ENCODE measurements at regions of chr5 and their contacts with region 1.

Region 1: DNA sequence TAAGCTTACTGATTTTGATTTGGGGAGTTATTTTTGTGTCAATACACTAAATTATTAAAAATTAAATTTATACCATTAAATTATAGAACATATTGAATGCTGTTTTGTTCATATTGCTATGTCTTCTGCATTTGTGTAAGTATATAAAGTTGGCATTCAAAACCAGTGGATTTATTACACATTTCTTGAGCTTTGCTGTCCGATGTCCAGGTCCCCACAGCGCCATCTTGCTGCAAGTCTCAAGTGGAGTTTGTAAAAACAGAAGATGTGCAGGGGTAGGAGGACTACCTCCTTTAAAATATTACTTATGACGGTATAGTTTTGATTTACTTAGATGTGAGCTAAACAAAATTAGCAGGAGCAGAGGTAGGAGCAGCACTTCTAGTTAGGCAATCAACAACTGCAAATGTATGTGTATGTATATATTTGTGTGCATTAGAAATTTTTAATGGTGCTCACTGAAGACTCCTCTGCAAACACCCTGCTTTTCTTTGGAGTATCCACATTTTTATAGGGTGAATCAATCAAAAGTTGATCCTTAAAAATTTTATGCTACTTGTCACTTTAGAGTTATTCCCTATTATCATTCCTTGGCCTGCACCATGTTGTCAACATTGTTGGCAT is 37.4 kb downstream of the CPEB4 start:
- DNase-seq: no peak
- H3K4me3 ChIP-seq: no peak overlapping the region
- H3K27ac ChIP-seq: no peak overlapping the region
- H3K4me1 ChIP-seq: no peaks in the 10 kb centered on the region
- H3K27me3 ChIP-seq: no peaks in the 10 kb centered on the region
- CTCF ChIP-seq: peak in 1 of 3 donors; percentile 14
- POLR2A ChIP-seq: no peak

Region 2: DNA sequence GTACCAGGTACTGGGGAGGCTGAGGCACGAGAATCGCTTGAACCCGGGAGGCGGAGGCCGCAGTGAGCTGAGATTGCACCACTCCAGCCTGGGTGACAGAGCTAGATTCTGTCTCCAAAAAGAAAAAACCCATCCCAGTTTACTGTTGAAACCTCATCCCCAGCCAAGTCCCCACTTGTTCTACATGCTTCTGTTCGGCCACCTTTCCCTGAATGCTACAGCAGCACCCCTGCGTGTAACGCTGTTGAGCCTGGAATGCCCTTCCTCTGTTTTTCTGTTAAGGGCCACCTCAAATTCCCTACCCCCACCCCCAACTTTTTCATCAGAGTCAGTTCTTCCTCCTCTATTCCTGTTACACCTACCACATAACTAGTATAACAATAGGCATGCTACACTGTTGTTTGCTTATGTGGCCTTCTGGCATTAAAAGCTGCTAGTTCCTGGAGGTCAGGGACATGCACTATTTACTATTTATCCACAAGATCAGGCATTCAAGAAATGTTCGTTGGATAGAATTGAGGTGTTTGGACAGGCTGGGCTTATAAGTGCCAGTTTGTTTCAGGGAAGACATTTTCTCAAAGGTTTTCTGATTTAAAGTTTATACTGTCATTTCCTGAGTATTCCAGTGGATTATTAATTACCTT is 16.3 kb after region 1 on chr5:
- intact Hi-C with region 1: loop called (anchors 1 kb)
- DNase-seq: no peak
- H3K4me3 ChIP-seq: no peak overlapping the region
- H3K27ac ChIP-seq: peak overlapping the region; percentile 68 to 78
- H3K4me1 ChIP-seq: no peaks in the 10 kb centered on the region
- H3K27me3 ChIP-seq: no peaks in the 10 kb centered on the region
- CTCF ChIP-seq: no peak
- POLR2A ChIP-seq: no peak